Activated CD8-positive, alpha-beta T cell treated with anti-CD3 and anti-CD28 coated beads, Interleukin-2, amount 10 ng/mL, durations not matched to agents 7 days and 5 days (primary cell): ENCODE measurements at regions of chr14 and their contacts with region 1.

Region 1: DNA sequence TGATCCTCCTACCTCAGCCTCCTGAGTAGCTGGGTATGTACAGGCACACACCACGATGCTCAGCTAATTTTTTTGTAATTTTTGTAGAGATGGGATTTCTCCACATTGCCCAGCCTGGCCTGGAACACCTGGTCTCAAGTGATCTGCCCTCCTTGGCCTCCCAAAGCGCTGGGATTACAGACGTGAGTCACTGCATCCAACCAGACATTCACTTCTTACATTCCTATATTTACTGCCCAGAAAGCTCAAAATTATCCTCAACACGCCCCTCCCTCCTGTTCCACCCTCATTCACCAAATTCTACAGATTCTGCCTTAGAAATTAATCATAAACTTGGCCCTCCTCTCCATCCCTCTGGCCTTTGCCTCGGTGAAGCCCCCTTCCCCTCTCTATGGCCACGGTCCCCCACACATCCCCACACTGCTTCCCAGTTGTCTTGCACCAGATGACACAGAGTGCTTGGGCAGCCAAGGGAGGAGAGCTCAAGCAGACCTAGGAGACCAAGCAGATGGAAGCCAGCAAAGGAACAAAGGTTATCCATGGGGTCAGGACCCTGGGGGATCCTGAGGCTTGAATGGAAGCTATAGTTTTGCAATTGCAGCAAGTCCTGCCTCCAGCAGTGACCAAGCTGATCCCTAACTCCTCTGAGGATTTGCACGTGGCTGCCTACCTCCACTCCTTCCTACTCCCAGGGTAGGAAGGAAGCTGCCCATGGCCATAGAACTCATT is 213.2 kb upstream of the FOXN3 start:
- DNase-seq: no peak
- ATAC-seq: no peak
- H3K4me3 Mint-ChIP-seq: no peak overlapping the region
- H3K27ac Mint-ChIP-seq: peak overlapping the region; percentile 17
- H3K4me1 Mint-ChIP-seq: peaks cover 45% of the 10 kb centered on the region
- H3K27me3 Mint-ChIP-seq: no peaks in the 10 kb centered on the region

Region 2: DNA sequence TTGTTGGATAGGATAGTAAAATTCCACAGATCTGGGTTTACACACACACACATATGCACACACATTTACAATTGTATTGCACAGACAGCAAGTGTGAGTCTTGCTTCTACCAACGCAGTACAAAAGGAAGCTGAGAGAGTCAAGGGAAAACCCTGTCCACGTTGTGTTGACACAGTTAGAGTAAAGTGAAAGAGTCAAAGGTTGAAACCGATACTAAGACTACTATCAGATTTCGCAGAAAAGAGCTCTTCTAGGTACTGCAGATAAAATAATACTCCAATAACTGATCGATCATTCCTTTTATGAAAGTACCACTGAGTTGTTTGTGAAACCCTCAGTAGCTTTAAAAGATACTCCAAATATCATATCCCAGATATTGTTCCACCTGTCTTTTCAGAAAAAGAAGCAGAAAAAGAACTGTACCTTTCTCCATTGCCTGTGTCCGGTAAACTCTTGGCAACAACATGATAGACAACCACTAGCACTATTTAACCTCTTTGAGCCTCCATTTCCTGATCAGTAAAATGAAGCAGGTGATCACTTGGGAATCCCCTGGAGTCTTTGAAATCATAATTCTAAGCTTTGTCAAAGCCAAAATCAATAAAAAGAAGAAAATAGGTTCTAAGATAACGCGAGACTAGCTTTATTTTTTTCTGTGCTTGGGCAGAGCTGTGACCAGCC is 11.4 kb after region 1 on chr14:
- CTCF ChIA-PET with region 1: interaction called, 9 read pairs
- POLR2A ChIA-PET with region 1: interaction called, 15 read pairs
- DNase-seq: peak; percentile 53
- ATAC-seq: peak; percentile 92
- H3K4me3 Mint-ChIP-seq: peak overlapping the region; percentile 67
- H3K27ac Mint-ChIP-seq: peak overlapping the region; percentile 92
- H3K4me1 Mint-ChIP-seq: peaks cover 57% of the 10 kb centered on the region
- H3K27me3 Mint-ChIP-seq: no peaks in the 10 kb centered on the region